ENCODE measurements at regions of chr17 and their contacts with region 1.

Region 1: DNA sequence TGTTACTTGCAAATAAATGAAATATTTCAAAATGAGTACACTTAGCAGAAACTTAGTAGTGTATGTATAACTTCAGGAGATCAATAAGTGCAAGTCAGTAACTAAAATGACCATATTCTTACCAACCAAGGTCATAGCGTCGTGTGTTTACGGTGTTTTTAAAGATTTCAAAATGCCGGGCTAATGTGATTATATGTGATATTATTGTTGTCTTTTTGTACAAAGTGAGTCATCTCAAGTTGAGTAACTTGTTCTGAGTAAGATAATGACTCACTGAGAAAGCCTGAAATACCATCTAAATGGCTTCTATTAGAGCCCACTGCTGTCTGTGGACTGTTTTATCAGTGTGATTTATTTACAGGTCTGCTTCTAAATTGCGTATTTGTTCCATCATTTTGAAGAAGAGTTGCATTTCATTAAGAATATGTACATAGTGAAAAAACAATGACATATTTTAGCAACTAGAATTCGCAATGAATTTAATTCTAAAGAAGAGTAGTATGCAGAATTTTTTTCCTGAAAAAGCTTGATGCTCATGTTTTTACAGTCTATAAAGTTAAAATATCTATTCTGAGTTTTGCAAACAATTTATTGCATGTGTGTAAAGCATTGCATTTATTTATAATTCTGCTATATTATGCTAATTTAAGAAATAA is 12.7 kb downstream of the KRT12 start:
- DNase-seq: peak; percentile 59
- H3K4me3 ChIP-seq: no peak overlapping the region
- H3K27ac ChIP-seq: no peak overlapping the region
- H3K4me1 ChIP-seq: peaks cover 8% of the 10 kb centered on the region
- H3K27me3 ChIP-seq: peaks cover 2 to 5% of the 10 kb centered on the region in 2 experiments
- CTCF ChIP-seq: no peak
- POLR2A ChIP-seq: no peak

Region 2: GRCh38 chr17:40803617-40804082 is 50.6 kb before region 1 on chr17:
- CTCF ChIA-PET with region 1: interaction called, 5 read pairs
- POLR2A ChIA-PET with region 1: no interaction called
- dilution Hi-C with region 1: no loop called
- intact Hi-C with region 1: loop called (anchors 2 kb)
- DNase-seq: peak; percentile 71
- H3K4me3 ChIP-seq: no peak overlapping the region
- H3K27ac ChIP-seq: no peak overlapping the region
- H3K4me1 ChIP-seq: no peaks in the 10 kb centered on the region
- H3K27me3 ChIP-seq: peaks cover 20 to 39% of the 10 kb centered on the region in 2 experiments
- CTCF ChIP-seq: peak; percentile 85 to 88
- POLR2A ChIP-seq: no peak

Region 3: DNA sequence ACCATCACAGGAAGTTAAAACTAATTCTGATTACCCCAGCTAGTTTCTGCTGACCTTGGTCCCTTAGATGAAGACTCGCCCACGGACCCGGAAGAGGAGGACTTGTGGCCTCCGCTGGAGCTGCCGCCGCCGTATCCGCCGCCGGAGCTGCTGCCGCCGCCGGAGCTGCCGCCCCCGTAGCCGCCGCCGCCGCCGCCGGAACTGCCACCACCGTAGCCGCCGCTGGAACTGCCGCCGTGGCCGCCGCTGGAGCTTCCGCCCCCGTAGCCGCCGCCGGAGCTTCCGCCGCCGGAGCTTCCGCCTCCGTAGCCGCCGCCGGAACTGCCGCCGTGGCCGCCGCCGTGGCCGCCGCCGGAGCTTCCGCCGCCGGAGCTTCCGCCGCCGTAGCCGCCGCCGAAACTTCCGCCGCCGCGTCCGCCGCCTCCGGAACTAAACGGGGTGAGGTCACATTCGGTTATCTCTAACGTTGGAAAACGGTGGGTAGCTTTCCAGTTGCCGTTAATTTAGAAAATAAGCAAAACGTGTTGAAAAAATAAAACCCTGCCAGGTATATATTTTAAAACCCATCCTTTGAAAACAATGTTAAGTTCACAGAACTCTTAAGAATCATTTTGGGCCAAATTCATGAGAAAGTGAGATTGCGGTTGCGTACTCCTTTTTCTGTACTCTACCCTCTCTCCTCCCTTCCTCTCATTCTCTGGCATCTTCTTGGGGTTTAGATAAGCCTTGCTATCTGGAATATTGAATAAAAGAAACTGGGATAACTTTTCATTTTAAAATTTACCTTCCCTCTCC is 35.4 kb before region 1 on chr17:
- CTCF ChIA-PET with region 1: interaction called, 10 read pairs
- POLR2A ChIA-PET with region 1: no interaction called
- dilution Hi-C with region 1: no loop called
- intact Hi-C with region 1: no loop called
- DNase-seq: peak; percentile 77
- H3K4me3 ChIP-seq: peak overlapping the region; percentile 49 to 99 (median 98)
- H3K27ac ChIP-seq: peak overlapping the region; percentile 75
- H3K4me1 ChIP-seq: peaks cover 9% of the 10 kb centered on the region
- H3K27me3 ChIP-seq: no peaks in the 10 kb centered on the region
- CTCF ChIP-seq: no peak
- POLR2A ChIP-seq: peak; percentile 48

Region 4: DNA sequence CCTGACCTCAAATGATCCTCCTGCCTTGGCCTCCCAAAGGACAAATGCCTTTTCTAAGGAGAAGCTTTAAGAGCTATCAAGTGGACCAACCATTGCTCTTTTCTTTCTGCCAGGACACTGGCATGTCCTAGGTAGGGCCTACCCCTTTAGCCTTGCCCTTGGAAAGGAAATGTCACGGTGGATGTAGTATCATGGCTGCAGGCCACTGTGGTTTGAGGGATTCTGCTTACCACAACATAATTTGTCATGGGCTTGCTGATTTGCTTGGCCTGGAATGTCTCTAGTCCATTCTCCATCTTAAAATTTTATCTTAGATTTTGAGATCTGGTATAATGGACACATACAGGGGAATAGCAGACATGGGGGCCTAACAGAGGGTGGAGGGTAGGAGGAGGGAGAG is 24.7 kb after region 1 on chr17:
- CTCF ChIA-PET with region 1: no interaction called
- POLR2A ChIA-PET with region 1: no interaction called
- dilution Hi-C with region 1: no loop called
- intact Hi-C with region 1: no loop called
- DNase-seq: no peak
- H3K4me3 ChIP-seq: no peak overlapping the region
- H3K27ac ChIP-seq: no peak overlapping the region
- H3K4me1 ChIP-seq: no peaks in the 10 kb centered on the region
- H3K27me3 ChIP-seq: peaks cover 10 to 11% of the 10 kb centered on the region in 2 experiments
- CTCF ChIP-seq: no peak
- POLR2A ChIP-seq: no peak

Region 5: DNA sequence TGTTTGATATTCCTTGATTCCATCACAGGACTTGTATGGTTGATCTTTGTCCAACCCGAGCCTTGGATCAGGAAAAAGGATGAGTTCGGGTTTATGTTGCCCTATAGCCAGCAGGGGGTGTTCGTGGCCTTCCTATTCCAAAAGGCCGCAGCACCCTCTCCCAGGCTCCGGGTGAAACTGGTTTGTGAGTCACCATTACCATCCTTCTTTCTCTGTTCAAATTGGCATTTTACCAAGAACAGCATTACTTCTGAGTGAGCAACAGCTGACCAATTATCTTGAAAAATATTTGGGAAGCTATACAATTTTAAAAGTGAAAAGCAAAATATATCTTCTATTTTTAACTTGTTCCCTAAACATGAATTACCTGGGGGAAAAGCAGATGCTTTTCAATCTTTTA is 55.1 kb after region 1 on chr17:
- CTCF ChIA-PET with region 1: interaction called, 4 read pairs
- POLR2A ChIA-PET with region 1: no interaction called
- dilution Hi-C with region 1: no loop called
- intact Hi-C with region 1: loop called (anchors 1 kb)
- DNase-seq: peak; percentile 90
- H3K4me3 ChIP-seq: no peak overlapping the region
- H3K27ac ChIP-seq: no peak overlapping the region
- H3K4me1 ChIP-seq: peaks cover 13% of the 10 kb centered on the region
- H3K27me3 ChIP-seq: peaks cover 0 to 3% of the 10 kb centered on the region in 2 experiments
- CTCF ChIP-seq: peak; percentile 75 to 77
- POLR2A ChIP-seq: no peak

Region 6: DNA sequence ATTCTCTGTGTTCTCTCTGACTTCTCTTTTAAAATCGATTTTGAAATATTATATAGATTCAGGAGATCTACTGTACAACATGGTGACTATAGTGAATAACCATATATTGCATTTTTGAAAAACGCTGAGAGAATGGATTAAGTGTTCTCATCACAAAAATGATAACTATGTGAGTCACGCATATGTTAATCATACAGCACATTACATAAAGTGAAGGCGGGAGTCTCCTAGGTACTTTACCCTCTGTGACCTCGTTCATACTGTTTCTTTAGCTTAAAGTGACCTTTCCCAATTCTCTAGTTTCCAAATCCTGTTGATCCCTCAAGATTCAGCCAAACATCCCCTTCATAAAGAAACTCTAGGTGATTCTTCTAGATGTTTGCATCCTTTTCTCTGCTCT is 148.5 kb after region 1 on chr17:
- CTCF ChIA-PET with region 1: no interaction called
- POLR2A ChIA-PET with region 1: no interaction called
- dilution Hi-C with region 1: no loop called
- intact Hi-C with region 1: no loop called
- DNase-seq: no peak
- H3K4me3 ChIP-seq: no peak overlapping the region
- H3K27ac ChIP-seq: no peak overlapping the region
- H3K4me1 ChIP-seq: no peaks in the 10 kb centered on the region
- H3K27me3 ChIP-seq: no peaks in the 10 kb centered on the region
- CTCF ChIP-seq: no peak
- POLR2A ChIP-seq: no peak

Region 7: DNA sequence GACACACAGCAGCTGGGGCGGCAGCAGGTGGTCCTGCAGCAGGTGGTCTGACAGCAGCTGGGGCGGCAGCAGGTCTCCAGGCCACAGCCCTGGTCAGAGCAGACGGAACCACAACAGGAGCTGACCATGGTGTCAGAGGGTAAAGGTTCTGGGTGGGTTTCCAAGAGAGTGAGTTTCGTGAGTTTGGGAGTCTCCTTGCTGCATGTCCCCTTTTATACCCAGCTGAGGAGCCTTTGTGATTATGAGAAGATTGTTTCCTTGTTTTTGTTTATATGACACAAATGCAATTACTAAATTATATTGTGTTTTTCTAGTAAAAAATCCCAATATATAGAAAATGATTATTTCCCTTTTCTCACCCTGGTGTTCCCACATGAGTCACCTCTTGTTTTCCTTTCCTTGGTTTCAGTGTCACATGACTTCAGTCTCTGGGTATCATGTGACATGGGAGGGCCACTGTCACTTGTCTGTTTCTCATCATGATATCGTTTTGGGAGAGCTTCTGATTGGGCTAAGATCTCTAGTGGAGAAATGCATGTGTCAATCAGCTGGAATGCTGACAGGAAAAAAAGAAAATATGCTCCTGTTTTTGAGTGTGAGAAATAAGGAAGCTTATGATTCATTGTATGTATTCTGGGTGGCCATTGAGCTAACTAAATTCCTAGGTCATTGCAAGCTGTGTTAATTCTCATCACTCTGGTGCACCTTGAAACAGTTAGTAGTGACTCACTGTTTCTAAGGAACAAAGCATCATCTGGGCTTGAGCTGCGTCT is 286.3 kb after region 1 on chr17 and contains the start of gene KRTAP4-6:
- CTCF ChIA-PET with region 1: no interaction called
- POLR2A ChIA-PET with region 1: no interaction called
- dilution Hi-C with region 1: no loop called
- intact Hi-C with region 1: no loop called
- DNase-seq: no peak
- H3K4me3 ChIP-seq: no peak within 1 kb of the TSS
- H3K27ac ChIP-seq: no peak within 1 kb of the TSS
- H3K4me1 ChIP-seq: no peaks in the 10 kb centered on the region
- H3K27me3 ChIP-seq: no peaks in the 10 kb centered on the region
- CTCF ChIP-seq: no peak
- POLR2A ChIP-seq: no peak
- total RNA-seq, gene KRTAP4-6: not detected in 2 replicates

Region 8: DNA sequence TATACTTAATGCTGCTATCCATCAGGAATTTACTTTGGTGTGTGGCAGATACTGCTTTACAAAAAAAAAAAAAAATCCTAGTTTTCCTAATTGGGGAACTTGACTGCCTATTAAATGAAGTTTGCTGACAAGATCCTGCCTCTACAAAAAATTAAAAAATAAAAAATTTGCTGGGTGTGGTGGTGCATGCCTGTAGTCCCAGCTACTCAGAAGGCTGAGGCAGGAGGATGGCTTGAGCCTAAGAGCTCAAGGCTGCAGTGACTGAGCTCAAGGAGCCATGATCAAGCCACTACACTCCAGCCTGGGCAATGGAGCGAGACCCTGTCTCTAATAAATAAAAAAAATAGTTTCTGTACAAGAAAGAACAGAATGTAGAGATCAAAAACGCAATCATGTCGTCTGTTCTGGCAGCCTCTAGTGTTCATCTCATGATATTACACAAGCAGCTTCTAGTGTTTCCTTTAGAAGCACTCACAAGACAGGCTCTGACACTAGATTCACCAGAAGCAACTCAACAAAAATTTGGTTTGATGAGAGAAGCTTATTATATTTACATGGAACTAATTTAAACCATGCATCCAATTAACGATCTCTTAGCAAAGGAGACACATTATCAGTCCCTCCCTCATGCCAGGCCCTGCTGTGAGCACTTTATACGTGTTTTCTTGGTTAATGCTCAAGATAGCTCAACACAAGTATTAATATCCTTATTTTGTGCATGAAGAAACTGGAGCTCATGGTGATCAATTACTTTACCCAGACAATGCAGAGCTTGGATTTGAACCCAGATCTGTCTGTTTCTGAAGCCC is 468.0 kb after region 1 on chr17:
- CTCF ChIA-PET with region 1: interaction called, 20 read pairs
- POLR2A ChIA-PET with region 1: no interaction called
- dilution Hi-C with region 1: no loop called
- intact Hi-C with region 1: no loop called
- DNase-seq: peak; percentile 49
- H3K4me3 ChIP-seq: no peak overlapping the region
- H3K27ac ChIP-seq: no peak overlapping the region
- H3K4me1 ChIP-seq: no peaks in the 10 kb centered on the region
- H3K27me3 ChIP-seq: peaks cover 0 to 2% of the 10 kb centered on the region in 2 experiments
- CTCF ChIP-seq: peak; percentile 40 to 69
- POLR2A ChIP-seq: no peak

Region 9: GRCh38 chr17:41329281-41329948 is 475.1 kb after region 1 on chr17:
- CTCF ChIA-PET with region 1: interaction called, 12 read pairs
- POLR2A ChIA-PET with region 1: no interaction called
- dilution Hi-C with region 1: no loop called
- intact Hi-C with region 1: loop called (anchors 1 kb)
- DNase-seq: peak; percentile 44
- H3K4me3 ChIP-seq: no peak overlapping the region
- H3K27ac ChIP-seq: no peak overlapping the region
- H3K4me1 ChIP-seq: no peaks in the 10 kb centered on the region
- H3K27me3 ChIP-seq: no peaks in the 10 kb centered on the region
- CTCF ChIP-seq: peak; percentile 77 to 87
- POLR2A ChIP-seq: no peak

Region 10: GRCh38 chr17:41655611-41656351 is 801.5 kb after region 1 on chr17:
- CTCF ChIA-PET with region 1: interaction called, 41 read pairs
- POLR2A ChIA-PET with region 1: no interaction called
- dilution Hi-C with region 1: no loop called
- intact Hi-C with region 1: no loop called
- DNase-seq: no peak
- H3K4me3 ChIP-seq: no peak overlapping the region
- H3K27ac ChIP-seq: no peak overlapping the region
- H3K4me1 ChIP-seq: no peaks in the 10 kb centered on the region
- H3K27me3 ChIP-seq: peaks cover 0 to 1% of the 10 kb centered on the region in 2 experiments
- CTCF ChIP-seq: no peak
- POLR2A ChIP-seq: no peak